ENCODE measurements at regions of chr2 and their contacts with region 1.

Region 1: DNA sequence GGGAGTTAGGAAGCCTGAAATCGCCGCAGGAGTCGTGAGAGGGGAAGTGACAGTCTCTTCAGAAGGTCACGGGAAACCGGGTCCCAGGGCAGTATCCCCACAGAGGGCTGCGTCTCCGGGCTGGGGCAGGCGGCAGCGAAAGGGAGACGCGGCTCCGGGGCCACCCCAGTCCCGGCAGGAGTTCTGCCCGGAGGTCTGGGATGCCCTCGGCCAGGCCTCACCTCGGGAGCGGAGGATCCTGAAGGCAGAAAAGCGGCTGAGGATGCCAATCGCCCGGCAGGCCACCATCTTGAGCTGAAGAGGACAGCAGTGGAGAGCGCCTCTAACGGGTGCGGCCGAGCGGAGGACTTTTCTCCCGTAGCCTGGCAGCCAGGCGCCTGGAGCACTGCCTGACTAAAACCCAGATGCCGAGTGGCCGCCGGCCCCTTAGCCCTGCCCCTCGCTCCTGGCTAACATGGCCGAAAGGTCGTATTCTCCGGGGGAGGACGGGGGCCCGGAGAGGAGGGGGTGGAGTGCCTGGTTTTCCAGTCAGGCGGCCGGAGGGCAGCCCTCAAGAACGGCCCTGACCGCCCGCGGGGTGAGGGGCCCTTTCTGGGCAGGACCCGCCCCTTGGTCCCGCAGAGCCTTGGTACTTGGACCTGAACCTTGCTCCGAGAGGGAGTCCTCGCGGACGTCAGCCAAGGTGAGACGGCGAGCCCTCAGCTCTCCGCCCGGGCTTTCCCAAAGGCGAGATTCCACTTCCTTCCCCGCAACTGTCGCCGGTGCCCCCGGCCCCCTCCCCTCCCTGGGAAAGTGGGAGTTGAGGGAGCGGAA is at the starts of genes HADHA and HADHB:
- DNase-seq: peak; percentile 76 to 91 (median 87)
- ATAC-seq: peak; percentile 92
- H3K4me3 ChIP-seq: peak within 1 kb of the TSS; percentile 99
- H3K4me3 Mint-ChIP-seq: peak within 1 kb of the TSS; percentile 96 to 100 (median 99)
- H3K27ac ChIP-seq: peak within 1 kb of the TSS; percentile 96
- H3K27ac Mint-ChIP-seq: peak within 1 kb of the TSS; percentile 98 to 100 (median 99)
- H3K4me1 ChIP-seq: peaks cover 13 to 19% of the 10 kb centered on the region in 2 donors
- H3K4me1 Mint-ChIP-seq: peaks cover 47 to 73% (median 57%) of the 10 kb centered on the region in 7 donors
- H3K27me3 ChIP-seq: no peaks in the 10 kb centered on the region
- H3K27me3 Mint-ChIP-seq: no peaks in the 10 kb centered on the region
- total RNA-seq, gene HADHA: 83.8 to 111 (median 102) TPM
- total RNA-seq, gene HADHB: 38.1 to 77.5 (median 64.2) TPM

Region 2: GRCh38 chr2:25982273-25982967 is 262.1 kb before region 1 on chr2 and contains the start of gene KIF3C:
- CTCF ChIA-PET with region 1: no interaction called
- POLR2A ChIA-PET with region 1: no interaction called
- intact Hi-C with region 1: loop called in 1 of 2 experiments (anchors 5 kb)
- DNase-seq: peak; percentile 59 to 76 (median 73)
- ATAC-seq: peak; percentile 93
- H3K4me3 ChIP-seq: peak within 1 kb of the TSS; percentile 64
- H3K4me3 Mint-ChIP-seq: peak within 1 kb of the TSS; percentile 83 to 94 (median 87)
- H3K27ac ChIP-seq: peak within 1 kb of the TSS; percentile 62
- H3K27ac Mint-ChIP-seq: peak within 1 kb of the TSS; percentile 28 to 89 (median 81)
- H3K4me1 ChIP-seq: peaks cover 0 to 5% of the 10 kb centered on the region in 2 donors
- H3K4me1 Mint-ChIP-seq: peaks cover 12 to 24% (median 16%) of the 10 kb centered on the region in 7 donors
- H3K27me3 ChIP-seq: no peaks in the 10 kb centered on the region
- H3K27me3 Mint-ChIP-seq: no peaks in the 10 kb centered on the region
- total RNA-seq, gene KIF3C: 2.9 to 6.3 (median 5.7) TPM

Region 3: DNA sequence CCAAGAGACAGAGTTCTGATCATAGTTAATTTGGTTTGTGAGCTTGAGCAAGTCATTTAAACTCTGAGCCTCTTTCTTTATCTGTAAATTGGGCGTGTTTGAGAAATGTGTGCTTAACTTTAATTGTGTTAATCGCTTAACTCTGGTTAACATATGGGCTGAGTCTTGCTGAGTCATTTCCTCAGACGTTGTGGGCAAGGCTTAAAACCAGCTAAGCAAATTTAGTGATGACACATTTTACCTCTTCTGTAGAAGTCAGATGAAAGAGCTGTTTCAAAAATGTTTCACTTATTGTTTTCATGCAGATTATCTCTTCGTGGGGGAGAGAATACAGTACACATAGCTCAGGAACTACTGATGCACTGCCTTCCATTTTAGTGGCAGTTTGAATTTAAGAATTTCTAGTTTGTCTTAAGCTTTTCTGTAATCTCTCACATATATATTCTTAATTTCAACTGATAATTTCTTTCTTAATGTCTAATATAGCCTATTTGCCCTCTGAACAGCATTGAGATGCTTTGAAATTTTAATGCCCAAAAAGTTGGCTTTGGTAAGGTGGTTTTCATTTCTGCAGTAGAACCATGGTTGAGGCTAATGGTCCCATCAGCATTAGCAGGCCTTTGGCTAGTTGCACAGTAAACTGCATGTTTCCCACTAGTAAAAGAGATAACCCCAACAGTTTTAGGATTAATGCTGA is 175.8 kb before region 1 on chr2:
- CTCF ChIA-PET with region 1: no interaction called
- POLR2A ChIA-PET with region 1: no interaction called
- intact Hi-C with region 1: loop called in 1 of 2 experiments (anchors 10 kb)
- DNase-seq: peak in 7 of 9 donors; percentile 12 to 49 (median 24)
- ATAC-seq: peak; percentile 89
- H3K4me3 ChIP-seq: no peak overlapping the region
- H3K4me3 Mint-ChIP-seq: peak overlapping the region in 5 of 10 donors; percentile 19 to 62 (median 47)
- H3K27ac ChIP-seq: no peak overlapping the region
- H3K27ac Mint-ChIP-seq: peak overlapping the region in 4 of 9 donors; percentile 4 to 62 (median 32)
- H3K4me1 ChIP-seq: peaks cover 7 to 25% of the 10 kb centered on the region in 2 donors
- H3K4me1 Mint-ChIP-seq: peaks cover 46 to 72% (median 54%) of the 10 kb centered on the region in 7 donors
- H3K27me3 ChIP-seq: no peaks in the 10 kb centered on the region
- H3K27me3 Mint-ChIP-seq: no peaks in the 10 kb centered on the region

Region 4: GRCh38 chr2:26184555-26185303 is 59.8 kb before region 1 on chr2:
- CTCF ChIA-PET with region 1: no interaction called
- POLR2A ChIA-PET with region 1: interaction called, 10 read pairs
- intact Hi-C with region 1: loop called (anchors 1 to 2 kb)
- DNase-seq: peak; percentile 82 to 91 (median 88)
- ATAC-seq: peak; percentile 98
- H3K4me3 ChIP-seq: peak overlapping the region; percentile 68
- H3K4me3 Mint-ChIP-seq: peak overlapping the region; percentile 79 to 91 (median 85)
- H3K27ac ChIP-seq: peak overlapping the region; percentile 71
- H3K27ac Mint-ChIP-seq: peak overlapping the region in 7 of 9 donors; percentile 25 to 90 (median 67)
- H3K4me1 ChIP-seq: peaks cover 5 to 8% of the 10 kb centered on the region in 2 donors
- H3K4me1 Mint-ChIP-seq: peaks cover 6 to 30% (median 23%) of the 10 kb centered on the region in 7 donors
- H3K27me3 ChIP-seq: no peaks in the 10 kb centered on the region
- H3K27me3 Mint-ChIP-seq: peaks cover 11 to 23% (median 15%) of the 10 kb centered on the region in 5 donors

Region 5: DNA sequence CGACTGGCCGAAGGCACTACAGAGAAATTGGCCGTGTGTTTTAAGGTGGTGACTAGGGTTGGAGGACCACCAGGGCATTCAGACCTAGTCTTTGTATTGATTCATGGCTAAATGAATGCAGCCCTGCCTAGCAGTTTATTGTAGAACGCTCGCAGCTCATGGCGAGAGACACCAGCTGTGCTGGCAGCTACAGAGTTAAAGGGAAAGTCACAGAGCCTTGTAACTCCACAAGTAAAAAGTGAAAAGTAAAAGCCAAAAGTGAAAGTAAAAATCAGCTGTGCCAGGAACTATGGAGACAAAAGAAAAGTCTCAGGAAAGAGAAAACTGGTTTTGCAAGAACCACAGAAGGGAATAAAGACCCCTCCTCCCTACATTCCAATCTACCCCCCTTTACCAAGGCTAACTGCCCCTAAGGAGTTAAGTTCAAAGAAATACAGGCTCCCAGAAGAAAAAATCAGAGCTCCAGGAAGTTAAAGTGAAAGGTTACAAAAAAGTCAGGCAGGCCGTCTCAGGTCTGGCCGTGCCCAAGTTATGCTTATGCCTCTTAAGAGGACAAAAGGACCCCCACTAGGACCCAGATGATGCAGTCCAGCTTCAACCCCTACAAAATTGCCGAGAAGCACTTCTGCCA is 55.1 kb after region 1 on chr2:
- CTCF ChIA-PET with region 1: no interaction called
- POLR2A ChIA-PET with region 1: interaction called, 12 read pairs
- intact Hi-C with region 1: loop called (anchors 1 to 2 kb)
- DNase-seq: peak in 7 of 9 donors; percentile 39 to 58 (median 51)
- ATAC-seq: peak; percentile 46
- H3K4me3 ChIP-seq: peak overlapping the region; percentile 78
- H3K4me3 Mint-ChIP-seq: no peak overlapping the region
- H3K27ac ChIP-seq: peak overlapping the region; percentile 84
- H3K27ac Mint-ChIP-seq: no peak overlapping the region
- H3K4me1 ChIP-seq: peaks cover 7 to 15% of the 10 kb centered on the region in 2 donors
- H3K4me1 Mint-ChIP-seq: peaks cover 0 to 8% (median 0%) of the 10 kb centered on the region in 7 donors
- H3K27me3 ChIP-seq: no peaks in the 10 kb centered on the region
- H3K27me3 Mint-ChIP-seq: peaks cover 0 to 29% (median 0%) of the 10 kb centered on the region in 5 donors

Region 6: GRCh38 chr2:26577434-26578112 is 333.1 kb after region 1 on chr2:
- CTCF ChIA-PET with region 1: no interaction called
- POLR2A ChIA-PET with region 1: no interaction called
- intact Hi-C with region 1: loop called in 1 of 2 experiments (anchors 5 kb)
- DNase-seq: peak; percentile 17 to 66 (median 52)
- ATAC-seq: peak; percentile 88
- H3K4me3 ChIP-seq: no peak overlapping the region
- H3K4me3 Mint-ChIP-seq: no peak overlapping the region
- H3K27ac ChIP-seq: no peak overlapping the region
- H3K27ac Mint-ChIP-seq: no peak overlapping the region
- H3K4me1 ChIP-seq: no peaks in the 10 kb centered on the region
- H3K4me1 Mint-ChIP-seq: peaks cover 0 to 5% (median 0%) of the 10 kb centered on the region in 7 donors
- H3K27me3 ChIP-seq: peaks cover 0 to 5% of the 10 kb centered on the region in 2 donors
- H3K27me3 Mint-ChIP-seq: peaks cover 5 to 13% (median 10%) of the 10 kb centered on the region in 5 donors